A673 (cell line): ENCODE measurements at regions of chr17 and their contacts with region 1.

Region 1: GRCh38 chr17:41147531-41148204 is 2.0 kb downstream of the KRTAP4-5 start:
- DNase-seq: peak; percentile 72
- H3K4me3 ChIP-seq: no peak overlapping the region
- H3K27ac ChIP-seq: peak overlapping the region; percentile 96
- H3K4me1 ChIP-seq: peaks cover 31% of the 10 kb centered on the region
- H3K27me3 ChIP-seq: no peaks in the 10 kb centered on the region
- CTCF ChIP-seq: no peak

Region 2: GRCh38 chr17:40803617-40804082 is 344.0 kb before region 1 on chr17:
- CTCF ChIA-PET with region 1: no interaction called
- POLR2A ChIA-PET with region 1: no interaction called
- intact Hi-C with region 1: loop called (anchors 5 kb)
- DNase-seq: peak; percentile 80
- H3K4me3 ChIP-seq: no peak overlapping the region
- H3K27ac ChIP-seq: no peak overlapping the region
- H3K4me1 ChIP-seq: no peaks in the 10 kb centered on the region
- H3K27me3 ChIP-seq: no peaks in the 10 kb centered on the region
- CTCF ChIP-seq: peak; percentile 77

Region 3: DNA sequence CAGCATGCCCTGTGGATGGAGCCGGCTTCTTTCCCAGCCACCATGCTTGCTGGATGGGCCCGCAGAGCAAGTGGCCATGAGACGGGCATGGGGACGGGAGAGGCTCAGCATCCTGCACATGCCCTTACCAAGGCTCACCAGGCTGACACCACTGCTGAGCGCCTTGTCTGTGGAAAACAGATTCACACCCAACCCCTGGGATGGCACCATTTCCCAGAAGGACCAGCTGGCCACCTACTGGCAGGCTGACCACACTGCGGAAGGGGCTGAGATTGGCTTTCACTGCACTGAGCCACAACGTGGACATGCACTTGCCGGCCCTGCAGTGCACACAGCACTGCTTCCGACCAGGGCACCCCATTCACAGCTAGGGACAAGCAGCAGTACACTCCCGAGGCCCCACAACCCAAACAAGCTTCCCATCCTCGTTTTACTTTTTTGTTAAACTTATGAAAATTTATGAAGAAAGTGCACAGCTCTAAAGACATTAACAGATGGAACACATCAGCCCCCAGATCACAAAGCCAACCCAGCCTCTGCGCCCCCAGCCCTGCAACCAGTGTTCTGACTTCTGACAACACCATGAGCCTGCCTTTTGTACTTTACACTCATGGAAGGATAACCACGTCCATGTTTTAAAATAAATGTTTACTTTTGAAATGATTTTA is 181.7 kb after region 1 on chr17:
- CTCF ChIA-PET with region 1: no interaction called
- POLR2A ChIA-PET with region 1: no interaction called
- intact Hi-C with region 1: loop called (anchors 5 kb)
- DNase-seq: peak; percentile 59
- H3K4me3 ChIP-seq: no peak overlapping the region
- H3K27ac ChIP-seq: no peak overlapping the region
- H3K4me1 ChIP-seq: no peaks in the 10 kb centered on the region
- H3K27me3 ChIP-seq: no peaks in the 10 kb centered on the region
- CTCF ChIP-seq: peak; percentile 60

Region 4: GRCh38 chr17:41496820-41497408 is 349.2 kb after region 1 on chr17:
- CTCF ChIA-PET with region 1: no interaction called
- POLR2A ChIA-PET with region 1: no interaction called
- intact Hi-C with region 1: loop called (anchors 5 kb)
- DNase-seq: peak; percentile 85
- H3K4me3 ChIP-seq: no peak overlapping the region
- H3K27ac ChIP-seq: no peak overlapping the region
- H3K4me1 ChIP-seq: peaks cover 4% of the 10 kb centered on the region
- H3K27me3 ChIP-seq: no peaks in the 10 kb centered on the region
- CTCF ChIP-seq: peak; percentile 68